CD4-positive, alpha-beta T cell (primary cell): ENCODE measurements at regions of chr12 and their contacts with region 1.

Region 1: GRCh38 chr12:27733052-27733656 is 22.5 kb downstream of the MRPS35 start:
- DNase-seq: peak in 12 of 14 experiments; percentile 12 to 65 (median 30)
- ATAC-seq: peak; percentile 78
- H3K4me3 ChIP-seq: no peak overlapping the region
- H3K4me3 Mint-ChIP-seq: no peak overlapping the region
- H3K27ac ChIP-seq: no peak overlapping the region
- H3K27ac Mint-ChIP-seq: no peak overlapping the region
- H3K4me1 ChIP-seq: no peaks in the 10 kb centered on the region
- H3K4me1 Mint-ChIP-seq: no peaks in the 10 kb centered on the region
- H3K27me3 ChIP-seq: no peaks in the 10 kb centered on the region
- H3K27me3 Mint-ChIP-seq: no peaks in the 10 kb centered on the region
- CTCF ChIP-seq: peak; percentile 87

Region 2: GRCh38 chr12:27940756-27941402 is 207.7 kb after region 1 on chr12:
- CTCF ChIA-PET with region 1: interaction called, 11 read pairs
- POLR2A ChIA-PET with region 1: no interaction called
- intact Hi-C with region 1: loop called (anchors 1 kb)
- DNase-seq: peak; percentile 45 to 77 (median 66)
- ATAC-seq: peak; percentile 65
- H3K4me3 ChIP-seq: no peak overlapping the region
- H3K4me3 Mint-ChIP-seq: no peak overlapping the region
- H3K27ac ChIP-seq: no peak overlapping the region
- H3K27ac Mint-ChIP-seq: no peak overlapping the region
- H3K4me1 ChIP-seq: no peaks in the 10 kb centered on the region
- H3K4me1 Mint-ChIP-seq: no peaks in the 10 kb centered on the region
- H3K27me3 ChIP-seq: peaks cover 0 to 3% of the 10 kb centered on the region in 2 experiments
- H3K27me3 Mint-ChIP-seq: peaks cover 21% of the 10 kb centered on the region
- CTCF ChIP-seq: peak; percentile 79

Region 3: DNA sequence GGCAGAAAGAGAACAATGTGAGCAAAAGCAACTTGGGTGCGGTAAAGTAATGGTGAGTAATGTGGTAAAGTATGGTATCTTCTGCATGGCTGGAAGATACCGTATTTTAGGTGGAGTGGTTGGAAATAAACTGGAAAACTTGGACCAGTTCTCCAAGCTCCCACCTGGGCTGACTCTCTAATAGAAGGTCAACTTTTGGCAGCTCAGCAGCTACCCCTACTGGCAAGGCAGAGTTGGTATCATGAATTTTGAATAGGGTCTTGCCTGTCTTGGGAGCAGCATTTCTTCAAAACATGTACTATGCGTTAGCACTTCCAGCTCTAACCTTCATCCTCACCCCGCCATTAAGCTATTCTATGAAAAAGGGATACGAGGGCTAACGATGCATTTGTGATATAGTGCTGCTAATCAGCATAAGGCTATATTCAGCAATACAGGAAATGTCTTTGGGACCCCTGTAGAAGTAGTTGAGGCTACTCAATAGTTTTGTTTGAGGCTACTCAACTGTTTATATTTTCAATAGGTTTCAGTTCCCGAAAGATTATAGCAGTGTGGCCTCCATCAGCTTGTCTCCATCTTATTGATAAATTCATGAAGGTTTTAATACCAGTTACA is 1139.6 kb after region 1 on chr12:
- CTCF ChIA-PET with region 1: no interaction called
- POLR2A ChIA-PET with region 1: no interaction called
- intact Hi-C with region 1: loop called in 1 of 2 experiments (anchors 5 kb)
- DNase-seq: peak in 2 of 14 experiments; percentile 8 to 23
- ATAC-seq: no peak
- H3K4me3 ChIP-seq: no peak overlapping the region
- H3K4me3 Mint-ChIP-seq: no peak overlapping the region
- H3K27ac ChIP-seq: no peak overlapping the region
- H3K27ac Mint-ChIP-seq: no peak overlapping the region
- H3K4me1 ChIP-seq: no peaks in the 10 kb centered on the region
- H3K4me1 Mint-ChIP-seq: no peaks in the 10 kb centered on the region
- H3K27me3 ChIP-seq: no peaks in the 10 kb centered on the region
- H3K27me3 Mint-ChIP-seq: peaks cover 6% of the 10 kb centered on the region
- CTCF ChIP-seq: no peak